ENCODE measurements at regions of chr6 and their contacts with region 1.

Region 1: DNA sequence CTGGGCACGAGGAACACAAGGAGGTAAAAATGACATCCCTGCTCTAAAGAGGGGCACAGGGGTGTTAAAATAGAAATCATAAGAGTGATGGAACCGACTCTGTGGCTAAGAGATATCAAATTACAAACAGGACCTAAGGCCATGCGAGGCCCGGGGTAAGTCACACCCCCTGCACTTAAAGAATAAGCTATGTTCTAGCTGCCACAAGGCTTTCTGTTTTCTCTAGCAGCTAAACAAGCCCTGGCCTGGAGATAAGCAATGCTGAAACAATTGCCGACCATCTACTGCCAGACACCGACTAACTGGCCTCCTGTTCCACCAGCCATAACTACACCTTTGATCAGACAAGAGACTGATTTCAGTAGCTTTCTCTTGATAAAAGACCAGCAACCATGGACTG is 32.4 kb downstream of the MDGA1 start:
- DNase-seq: no peak
- ATAC-seq: no peak
- H3K4me3 Mint-ChIP-seq: no peak overlapping the region
- H3K27ac Mint-ChIP-seq: no peak overlapping the region
- H3K4me1 Mint-ChIP-seq: no peaks in the 10 kb centered on the region
- H3K27me3 Mint-ChIP-seq: peaks cover 1% of the 10 kb centered on the region
- CTCF ChIP-seq: no peak

Region 2: GRCh38 chr6:37624986-37625574 is 40.2 kb before region 1 on chr6:
- CTCF ChIA-PET with region 1: no interaction called
- POLR2A ChIA-PET with region 1: no interaction called
- intact Hi-C with region 1: no loop called
- DNase-seq: no peak
- ATAC-seq: peak; percentile 40
- H3K4me3 Mint-ChIP-seq: no peak overlapping the region
- H3K27ac Mint-ChIP-seq: no peak overlapping the region
- H3K4me1 Mint-ChIP-seq: peaks cover 18% of the 10 kb centered on the region
- H3K27me3 Mint-ChIP-seq: peaks cover 5% of the 10 kb centered on the region
- CTCF ChIP-seq: no peak

Region 3: GRCh38 chr6:37653933-37654565 is 11.3 kb before region 1 on chr6:
- CTCF ChIA-PET with region 1: interaction called, 10 read pairs
- POLR2A ChIA-PET with region 1: interaction called, 3 read pairs
- intact Hi-C with region 1: no loop called
- DNase-seq: peak; percentile 77
- ATAC-seq: peak; percentile 70
- H3K4me3 Mint-ChIP-seq: no peak overlapping the region
- H3K27ac Mint-ChIP-seq: no peak overlapping the region
- H3K4me1 Mint-ChIP-seq: peaks cover 7% of the 10 kb centered on the region
- H3K27me3 Mint-ChIP-seq: peaks cover 12% of the 10 kb centered on the region
- CTCF ChIP-seq: peak; percentile 95

Measured in activated CD8-positive, alpha-beta T cell treated with anti-CD3 and anti-CD28 coated beads for 36 hours (primary cell).